Caco-2 (cell line): ENCODE measurements at regions of chr1 and their contacts with region 1.

Region 1: GRCh38 chr1:92310185-92310597 is 11.3 kb downstream of the RPAP2 start:
- DNase-seq: no peak
- H3K4me3 ChIP-seq: no peak overlapping the region
- H3K4me3 Mint-ChIP-seq: no peak overlapping the region
- H3K27ac Mint-ChIP-seq: no peak overlapping the region
- H3K4me1 ChIP-seq: no peaks in the 10 kb centered on the region
- H3K4me1 Mint-ChIP-seq: no peaks in the 10 kb centered on the region
- H3K27me3 ChIP-seq: no peaks in the 10 kb centered on the region
- H3K27me3 Mint-ChIP-seq: no peaks in the 10 kb centered on the region
- CTCF ChIP-seq: peak in 1 of 2 experiments; percentile 51

Region 2: DNA sequence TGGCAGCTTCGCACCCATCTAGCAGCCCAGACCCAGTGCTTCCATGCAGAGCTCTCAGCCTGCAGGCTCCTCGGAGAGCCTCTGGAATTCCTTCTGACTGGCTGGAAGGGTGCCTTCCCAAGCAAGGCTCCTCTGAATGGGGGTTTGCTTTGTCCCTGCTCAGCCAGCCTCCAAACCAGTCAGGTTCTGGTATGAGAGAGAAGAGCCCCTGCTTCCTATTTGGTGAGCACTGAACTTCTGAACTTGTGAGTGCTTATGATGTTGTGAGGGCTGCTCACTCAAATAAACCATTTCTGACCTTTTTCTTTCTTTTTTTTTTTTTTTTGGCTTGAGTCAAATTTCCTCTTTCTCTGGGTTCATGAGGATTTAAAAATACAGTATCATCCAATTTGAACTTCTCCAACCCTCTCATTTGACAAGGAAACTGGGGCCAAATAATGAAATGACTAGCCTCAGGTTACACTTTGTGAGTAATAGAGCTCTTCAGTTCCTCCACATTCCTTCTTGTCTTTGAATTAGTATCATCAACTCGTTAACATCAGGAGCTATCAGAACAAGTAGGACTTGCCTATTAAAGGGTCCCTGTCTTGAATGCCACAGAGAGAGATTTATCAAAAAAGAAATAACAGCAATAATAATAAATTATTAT is 137.0 kb after region 1 on chr1:
- CTCF ChIA-PET with region 1: no interaction called
- POLR2A ChIA-PET with region 1: interaction called, 10 read pairs
- intact Hi-C with region 1: no loop called
- DNase-seq: no peak
- H3K4me3 ChIP-seq: no peak overlapping the region
- H3K4me3 Mint-ChIP-seq: no peak overlapping the region
- H3K27ac Mint-ChIP-seq: peak overlapping the region; percentile 53
- H3K4me1 ChIP-seq: peaks cover 27% of the 10 kb centered on the region
- H3K4me1 Mint-ChIP-seq: peaks cover 39% of the 10 kb centered on the region
- H3K27me3 ChIP-seq: no peaks in the 10 kb centered on the region
- H3K27me3 Mint-ChIP-seq: no peaks in the 10 kb centered on the region
- CTCF ChIP-seq: no peak

Region 3: GRCh38 chr1:92485381-92486257 is 175.4 kb after region 1 on chr1:
- CTCF ChIA-PET with region 1: interaction called, 3 read pairs
- POLR2A ChIA-PET with region 1: no interaction called
- intact Hi-C with region 1: loop called (anchors 10 kb)
- DNase-seq: peak; percentile 68 to 79
- H3K4me3 ChIP-seq: peak overlapping the region; percentile 50
- H3K4me3 Mint-ChIP-seq: peak overlapping the region; percentile 91
- H3K27ac Mint-ChIP-seq: no peak overlapping the region
- H3K4me1 ChIP-seq: no peaks in the 10 kb centered on the region
- H3K4me1 Mint-ChIP-seq: no peaks in the 10 kb centered on the region
- H3K27me3 ChIP-seq: no peaks in the 10 kb centered on the region; the same call in 1 of the 2 replicates
- H3K27me3 Mint-ChIP-seq: no peaks in the 10 kb centered on the region
- CTCF ChIP-seq: peak in 1 of 2 experiments; percentile 45

Region 4: DNA sequence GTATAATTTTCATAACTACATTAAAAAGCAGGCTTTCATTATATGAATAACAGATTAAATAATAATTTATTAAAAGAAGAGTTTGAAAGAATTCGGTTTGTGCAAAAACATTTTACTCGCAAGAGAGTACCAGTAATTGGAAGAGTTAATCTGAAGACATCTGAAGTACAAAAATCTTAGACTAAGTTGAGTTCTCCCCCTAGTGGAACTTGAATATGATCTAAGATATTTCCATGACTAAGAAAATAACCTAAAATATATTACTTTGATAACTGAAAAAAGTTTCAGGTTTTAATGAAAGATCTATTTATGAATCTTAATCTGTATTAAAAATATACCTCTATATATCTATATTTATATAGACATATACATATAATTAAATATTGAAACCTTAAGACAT is 289.0 kb after region 1 on chr1:
- CTCF ChIA-PET with region 1: no interaction called
- POLR2A ChIA-PET with region 1: no interaction called
- intact Hi-C with region 1: loop called (anchors 10 kb)
- DNase-seq: no peak
- H3K4me3 ChIP-seq: no peak overlapping the region
- H3K4me3 Mint-ChIP-seq: no peak overlapping the region
- H3K27ac Mint-ChIP-seq: peak overlapping the region; percentile 8
- H3K4me1 ChIP-seq: no peaks in the 10 kb centered on the region
- H3K4me1 Mint-ChIP-seq: no peaks in the 10 kb centered on the region
- H3K27me3 ChIP-seq: no peaks in the 10 kb centered on the region
- H3K27me3 Mint-ChIP-seq: no peaks in the 10 kb centered on the region
- CTCF ChIP-seq: peak; percentile 13 to 19

Region 5: GRCh38 chr1:92623187-92623778 is 313.1 kb after region 1 on chr1:
- CTCF ChIA-PET with region 1: no interaction called
- POLR2A ChIA-PET with region 1: no interaction called
- intact Hi-C with region 1: loop called (anchors 1 kb)
- DNase-seq: no peak
- H3K4me3 ChIP-seq: no peak overlapping the region
- H3K4me3 Mint-ChIP-seq: no peak overlapping the region
- H3K27ac Mint-ChIP-seq: no peak overlapping the region
- H3K4me1 ChIP-seq: no peaks in the 10 kb centered on the region
- H3K4me1 Mint-ChIP-seq: no peaks in the 10 kb centered on the region
- H3K27me3 ChIP-seq: no peaks in the 10 kb centered on the region
- H3K27me3 Mint-ChIP-seq: no peaks in the 10 kb centered on the region
- CTCF ChIP-seq: peak; percentile 20 to 35